IMR-90 (cell line): ENCODE measurements at regions of chr6 and their contacts with region 1.

Region 1: DNA sequence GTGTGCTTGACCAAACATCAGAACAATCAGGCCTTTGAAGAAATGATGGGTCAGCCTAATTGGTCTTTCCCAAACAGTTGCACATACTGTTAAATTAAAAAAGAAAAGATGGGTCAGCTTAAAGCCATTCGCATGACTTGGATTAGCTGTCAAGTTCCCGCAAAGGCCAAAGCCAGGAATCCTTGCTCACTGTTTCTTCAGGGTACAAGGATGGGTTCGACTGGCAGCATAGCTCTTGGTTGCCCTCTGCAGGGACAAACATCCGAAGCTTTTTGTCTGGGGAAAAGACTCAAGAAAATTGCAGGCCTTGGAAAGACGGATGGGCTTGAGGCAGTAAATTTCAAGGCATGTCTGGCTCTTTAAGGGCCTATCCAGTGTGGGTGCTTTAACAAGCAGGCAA is 168.0 kb downstream of the HDGFL1 start:
- DNase-seq: peak; percentile 53
- ATAC-seq: peak; percentile 63
- H3K4me3 ChIP-seq: no peak overlapping the region
- H3K27ac ChIP-seq: no peak overlapping the region
- H3K4me1 ChIP-seq: no peaks in the 10 kb centered on the region; the same call in 1 of the 2 replicates
- H3K27me3 ChIP-seq: no peaks in the 10 kb centered on the region
- CTCF ChIP-seq: peak; percentile 49
- POLR2A ChIP-seq: no peak
- RAD21 ChIP-seq: peak; percentile 64

Region 2: DNA sequence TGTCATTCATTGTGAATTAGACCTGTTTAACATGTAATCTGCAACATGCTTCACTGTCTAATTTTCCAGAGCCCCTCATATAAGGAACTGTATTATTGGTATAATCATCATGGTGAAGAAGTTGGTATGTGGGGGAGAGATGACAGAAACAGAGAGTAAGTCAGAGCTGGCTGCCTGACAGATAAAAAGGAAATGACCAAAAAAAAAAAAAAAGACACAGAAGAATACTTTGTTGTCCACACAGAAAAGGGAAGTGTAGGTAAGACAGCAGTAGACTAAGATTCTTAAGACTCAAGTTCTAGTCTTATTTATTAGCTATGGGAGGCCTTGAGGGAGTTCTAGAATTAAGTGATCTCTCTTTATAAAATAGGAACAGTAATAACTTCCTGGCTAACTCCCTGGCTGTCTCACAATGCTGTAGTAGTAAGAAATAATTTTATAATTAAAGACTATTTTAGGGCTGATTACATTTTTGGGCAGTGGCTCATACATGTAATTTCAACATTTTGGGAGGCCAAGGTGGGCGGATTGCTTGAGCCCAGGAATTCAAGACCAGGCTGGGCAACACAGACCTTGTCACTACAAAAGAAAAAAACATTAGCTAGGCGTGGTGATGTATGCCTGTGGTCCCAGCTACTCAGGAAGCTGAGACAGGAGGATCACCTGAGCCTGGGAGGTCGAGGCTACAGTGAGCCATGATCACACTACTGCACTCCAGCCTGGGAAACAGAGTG is 543.0 kb before region 1 on chr6:
- CTCF ChIA-PET with region 1: no interaction called
- POLR2A ChIA-PET with region 1: no interaction called
- dilution Hi-C with region 1: no loop called
- in situ Hi-C with region 1: no loop called
- intact Hi-C with region 1: loop called (anchors 2 kb)
- DNase-seq: peak; percentile 72
- ATAC-seq: peak; percentile 62
- H3K4me3 ChIP-seq: no peak overlapping the region
- H3K27ac ChIP-seq: peak overlapping the region; percentile 69
- H3K4me1 ChIP-seq: peaks cover 6% of the 10 kb centered on the region
- H3K27me3 ChIP-seq: no peaks in the 10 kb centered on the region
- CTCF ChIP-seq: no peak
- POLR2A ChIP-seq: no peak
- RAD21 ChIP-seq: no peak

Region 3: GRCh38 chr6:22596011-22596410 is 141.3 kb before region 1 on chr6:
- CTCF ChIA-PET with region 1: no interaction called
- POLR2A ChIA-PET with region 1: no interaction called
- dilution Hi-C with region 1: no loop called
- in situ Hi-C with region 1: no loop called
- intact Hi-C with region 1: no loop called
- DNase-seq: peak; percentile 61
- ATAC-seq: peak; percentile 44; the same call in 1 of the 2 replicates
- H3K4me3 ChIP-seq: no peak overlapping the region
- H3K27ac ChIP-seq: no peak overlapping the region
- H3K4me1 ChIP-seq: peaks cover 4% of the 10 kb centered on the region
- H3K27me3 ChIP-seq: no peaks in the 10 kb centered on the region
- CTCF ChIP-seq: no peak
- POLR2A ChIP-seq: no peak
- RAD21 ChIP-seq: no peak

Region 4: DNA sequence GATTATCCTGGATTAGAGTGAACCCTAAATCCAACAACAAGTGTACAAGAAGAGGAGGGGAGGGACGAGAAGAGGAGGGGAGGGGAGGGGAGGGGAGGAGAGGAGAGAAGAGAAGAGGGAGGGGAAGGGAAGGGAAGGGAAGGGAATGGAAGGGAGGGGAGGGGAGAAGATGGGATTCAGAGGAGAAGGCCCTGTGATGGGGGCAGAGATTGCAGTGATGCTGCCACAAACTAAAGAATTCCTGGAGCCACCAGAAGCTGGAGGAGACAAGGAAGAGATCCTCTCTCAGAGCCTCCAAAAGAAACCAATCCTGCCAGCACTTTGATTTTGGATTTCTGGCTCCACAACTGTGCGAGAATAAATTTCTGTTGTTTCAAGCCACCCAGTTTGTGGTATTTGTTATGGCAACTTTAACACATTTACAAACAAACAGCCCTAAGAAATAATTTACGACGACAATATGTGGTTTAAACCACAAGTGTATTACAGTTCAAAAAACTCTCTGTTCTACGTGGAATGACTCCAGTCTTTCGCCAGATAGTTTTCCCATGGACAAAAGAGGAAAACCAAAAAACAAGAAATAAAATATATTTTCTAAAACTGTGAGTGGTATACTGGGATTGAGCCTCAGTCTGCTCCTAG is 67.4 kb after region 1 on chr6:
- CTCF ChIA-PET with region 1: no interaction called
- POLR2A ChIA-PET with region 1: no interaction called
- dilution Hi-C with region 1: no loop called
- in situ Hi-C with region 1: no loop called
- intact Hi-C with region 1: no loop called
- DNase-seq: no peak
- ATAC-seq: no peak
- H3K4me3 ChIP-seq: no peak overlapping the region
- H3K27ac ChIP-seq: no peak overlapping the region
- H3K4me1 ChIP-seq: no peaks in the 10 kb centered on the region
- H3K27me3 ChIP-seq: no peaks in the 10 kb centered on the region
- CTCF ChIP-seq: no peak
- POLR2A ChIP-seq: no peak
- RAD21 ChIP-seq: no peak

Region 5: GRCh38 chr6:23202207-23202606 is 464.9 kb after region 1 on chr6:
- CTCF ChIA-PET with region 1: no interaction called
- POLR2A ChIA-PET with region 1: no interaction called
- dilution Hi-C with region 1: no loop called
- in situ Hi-C with region 1: no loop called
- intact Hi-C with region 1: no loop called
- DNase-seq: no peak
- ATAC-seq: no peak
- H3K4me3 ChIP-seq: no peak overlapping the region
- H3K27ac ChIP-seq: no peak overlapping the region
- H3K4me1 ChIP-seq: no peaks in the 10 kb centered on the region
- H3K27me3 ChIP-seq: no peaks in the 10 kb centered on the region
- CTCF ChIP-seq: no peak
- POLR2A ChIP-seq: no peak
- RAD21 ChIP-seq: no peak